ENCODE measurements at regions of chr10 and their contacts with region 1.

Region 1: DNA sequence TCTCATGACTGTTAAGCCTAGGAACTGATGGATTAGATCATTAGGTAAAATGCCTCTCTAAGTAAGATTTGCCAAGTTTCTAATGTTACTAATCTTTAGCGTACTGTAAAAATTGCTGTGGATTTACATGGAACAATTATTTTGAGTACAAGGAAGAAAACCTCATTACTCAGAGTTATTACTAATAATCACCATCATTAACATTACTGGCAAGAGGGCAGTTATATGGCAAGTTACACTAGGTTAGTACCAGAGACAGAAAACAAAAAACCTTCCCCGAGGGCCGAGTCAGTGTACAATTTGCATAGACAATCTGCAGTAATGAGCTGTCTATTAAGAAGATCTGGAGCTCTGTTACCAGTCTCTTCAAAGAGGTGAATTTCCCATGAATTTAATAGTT is 775.6 kb downstream of the GATA3 start:
- DNase-seq: no peak
- H3K4me3 ChIP-seq: no peak overlapping the region
- H3K27ac ChIP-seq: no peak overlapping the region
- H3K4me1 ChIP-seq: no peaks in the 10 kb centered on the region
- H3K27me3 ChIP-seq: no peaks in the 10 kb centered on the region
- CTCF ChIP-seq: no peak

Region 2: DNA sequence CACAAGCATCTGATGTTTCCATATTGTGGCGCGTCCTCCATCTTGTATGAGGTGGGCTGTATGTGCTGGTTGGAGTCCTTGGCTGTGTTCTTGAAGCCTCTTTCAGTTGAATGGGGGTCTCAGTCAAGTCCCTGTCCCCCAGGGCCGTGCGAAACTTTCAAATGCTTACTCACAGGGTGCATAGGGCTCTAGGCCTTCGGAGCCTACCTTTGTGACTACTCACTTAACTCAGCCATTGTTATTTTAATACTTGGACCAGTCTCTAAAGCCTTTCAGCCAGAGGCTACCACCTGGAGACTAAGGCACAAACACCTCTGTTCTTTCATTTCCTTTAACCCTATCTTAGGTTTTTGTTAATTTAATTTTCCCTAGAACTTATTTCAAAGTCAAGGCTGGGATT is 10.3 kb after region 1 on chr10:
- CTCF ChIA-PET with region 1: no interaction called
- POLR2A ChIA-PET with region 1: interaction called, 15 read pairs
- intact Hi-C with region 1: no loop called
- DNase-seq: no peak
- H3K4me3 ChIP-seq: no peak overlapping the region
- H3K27ac ChIP-seq: no peak overlapping the region
- H3K4me1 ChIP-seq: no peaks in the 10 kb centered on the region
- H3K27me3 ChIP-seq: no peaks in the 10 kb centered on the region
- CTCF ChIP-seq: no peak